BJ (cell line): ENCODE measurements at regions of chr10 and their contacts with region 1.

Region 1: DNA sequence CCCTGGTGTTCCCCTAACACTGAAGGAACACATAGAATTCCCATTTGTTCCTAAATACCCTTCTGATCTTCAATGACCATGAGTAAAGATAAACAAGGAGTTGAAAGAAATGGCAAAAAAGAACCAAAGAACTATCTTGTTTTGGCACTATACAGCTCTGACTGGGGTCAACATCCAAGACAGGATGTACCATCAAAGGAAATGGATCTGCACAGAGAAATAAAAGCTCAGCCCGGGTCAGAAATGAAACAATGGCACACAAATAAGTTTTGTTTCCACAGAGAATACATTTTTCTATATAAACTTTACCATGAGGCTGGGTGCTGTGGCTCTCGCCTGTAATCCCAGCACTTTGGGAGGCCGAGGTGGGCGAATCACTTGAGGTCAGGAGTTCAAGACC is 18.0 kb upstream of the USP54 start:
- DNase-seq: no peak
- H3K4me3 ChIP-seq: no peak overlapping the region
- H3K27me3 ChIP-seq: no peaks in the 10 kb centered on the region
- CTCF ChIP-seq: no peak

Region 2: DNA sequence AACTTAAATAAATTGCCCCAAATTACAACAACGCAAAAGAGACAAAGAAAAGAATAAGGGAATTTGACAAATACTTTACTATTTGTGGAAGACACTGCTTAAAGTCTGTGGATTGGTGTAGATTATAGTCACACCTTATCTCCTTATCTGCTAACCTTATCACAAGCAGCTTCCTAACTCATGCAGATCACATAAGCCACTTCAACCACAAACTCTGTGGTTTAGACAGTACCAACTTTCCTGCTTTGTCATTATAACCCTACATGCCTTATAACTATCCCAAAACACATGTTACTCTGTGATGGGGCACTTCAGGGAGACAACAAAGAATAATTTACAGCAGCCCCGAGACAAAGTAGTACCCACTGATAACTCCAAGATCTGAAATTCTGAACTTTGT is 71.8 kb before region 1 on chr10:
- CTCF ChIA-PET with region 1: no interaction called
- POLR2A ChIA-PET with region 1: interaction called, 13 read pairs
- DNase-seq: no peak
- H3K4me3 ChIP-seq: no peak overlapping the region
- H3K27me3 ChIP-seq: no peaks in the 10 kb centered on the region
- CTCF ChIP-seq: no peak